OCI-LY7 (cell line): ENCODE measurements at regions of chr2 and their contacts with region 1.

Region 1: GRCh38 chr2:37376421-37377186 is 32.2 kb downstream of the QPCT start:
- DNase-seq: peak; percentile 95
- H3K4me3 ChIP-seq: peak overlapping the region; percentile 58
- H3K27ac ChIP-seq: peak overlapping the region; percentile 98
- H3K4me1 ChIP-seq: peaks cover 94% of the 10 kb centered on the region
- CTCF ChIP-seq: no peak

Region 2: GRCh38 chr2:36178384-36178783 is 1198.2 kb before region 1 on chr2:
- CTCF ChIA-PET with region 1: no interaction called
- POLR2A ChIA-PET with region 1: no interaction called
- intact Hi-C with region 1: no loop called
- DNase-seq: no peak
- H3K4me3 ChIP-seq: no peak overlapping the region
- H3K27ac ChIP-seq: no peak overlapping the region
- H3K4me1 ChIP-seq: no peaks in the 10 kb centered on the region
- CTCF ChIP-seq: no peak

Region 3: GRCh38 chr2:36197181-36197971 is 1179.2 kb before region 1 on chr2:
- CTCF ChIA-PET with region 1: no interaction called
- POLR2A ChIA-PET with region 1: no interaction called
- intact Hi-C with region 1: no loop called
- DNase-seq: no peak
- H3K4me3 ChIP-seq: no peak overlapping the region
- H3K27ac ChIP-seq: no peak overlapping the region
- H3K4me1 ChIP-seq: no peaks in the 10 kb centered on the region
- CTCF ChIP-seq: no peak

Region 4: DNA sequence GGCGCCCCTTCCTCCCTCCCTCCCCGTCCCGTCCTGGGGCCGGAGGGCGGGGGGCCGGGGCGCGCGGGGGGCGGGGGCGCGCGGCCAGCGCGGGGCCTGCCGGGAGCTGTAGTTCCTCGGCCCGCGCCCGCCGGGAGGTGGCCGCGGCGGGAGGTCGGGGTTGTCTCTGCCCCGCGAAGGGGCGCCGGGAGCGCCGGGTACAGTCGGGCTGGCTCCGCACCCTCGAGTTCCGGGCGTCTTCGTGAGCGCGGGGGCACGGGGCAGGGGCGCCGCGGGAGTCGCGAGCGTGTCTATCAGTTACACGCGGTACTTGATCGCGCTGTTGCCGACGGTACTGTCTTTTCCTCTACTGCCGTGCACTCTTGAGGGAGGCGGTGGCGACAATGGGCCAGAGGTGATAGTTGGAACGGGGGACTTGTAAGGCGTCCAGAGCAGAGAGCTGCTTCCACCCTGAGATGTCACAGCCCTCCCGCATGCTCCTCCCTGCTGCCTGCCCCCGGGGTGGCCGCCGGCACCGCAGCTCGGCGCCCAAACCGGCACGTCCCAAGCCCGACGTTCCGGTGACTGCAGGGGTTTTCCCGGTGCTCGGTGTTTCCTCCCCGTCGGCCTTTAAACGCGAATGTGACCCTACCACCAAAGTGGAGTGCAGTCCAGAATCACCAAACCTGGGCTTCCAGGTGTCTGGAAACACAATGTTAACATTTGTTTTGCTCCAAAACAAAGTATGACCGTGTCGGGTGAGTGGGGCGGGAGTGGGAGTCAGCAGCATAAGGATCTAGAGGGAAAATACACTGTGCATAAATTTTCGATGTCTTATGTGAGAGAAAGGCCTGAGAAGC is 51.6 kb before region 1 on chr2 and contains the start of gene PRKD3:
- CTCF ChIA-PET with region 1: no interaction called
- POLR2A ChIA-PET with region 1: interaction called, 209 read pairs
- intact Hi-C with region 1: loop called (anchors 2 kb)
- DNase-seq: no peak
- H3K4me3 ChIP-seq: peak within 1 kb of the TSS; percentile 98
- H3K27ac ChIP-seq: peak within 1 kb of the TSS; percentile 81
- H3K4me1 ChIP-seq: peaks cover 40% of the 10 kb centered on the region
- CTCF ChIP-seq: no peak
- total RNA-seq, gene PRKD3: 63.2 and 74.3 TPM in 2 replicates

Region 5: GRCh38 chr2:37337642-37338310 is 38.8 kb before region 1 on chr2:
- CTCF ChIA-PET with region 1: interaction called, 4 read pairs
- POLR2A ChIA-PET with region 1: interaction called, 208 read pairs
- intact Hi-C with region 1: loop called (anchors 1 kb)
- DNase-seq: peak; percentile 35
- H3K4me3 ChIP-seq: peak overlapping the region; percentile 49
- H3K27ac ChIP-seq: peak overlapping the region; percentile 74
- H3K4me1 ChIP-seq: peaks cover 76% of the 10 kb centered on the region
- CTCF ChIP-seq: no peak

Region 6: GRCh38 chr2:37350034-37350433 is 26.6 kb before region 1 on chr2:
- CTCF ChIA-PET with region 1: interaction called, 5 read pairs
- POLR2A ChIA-PET with region 1: interaction called, 179 read pairs
- intact Hi-C with region 1: loop called (anchors 1 kb)
- DNase-seq: peak; percentile 63
- H3K4me3 ChIP-seq: no peak overlapping the region
- H3K27ac ChIP-seq: peak overlapping the region; percentile 43
- H3K4me1 ChIP-seq: peaks cover 71% of the 10 kb centered on the region
- CTCF ChIP-seq: no peak

Region 7: DNA sequence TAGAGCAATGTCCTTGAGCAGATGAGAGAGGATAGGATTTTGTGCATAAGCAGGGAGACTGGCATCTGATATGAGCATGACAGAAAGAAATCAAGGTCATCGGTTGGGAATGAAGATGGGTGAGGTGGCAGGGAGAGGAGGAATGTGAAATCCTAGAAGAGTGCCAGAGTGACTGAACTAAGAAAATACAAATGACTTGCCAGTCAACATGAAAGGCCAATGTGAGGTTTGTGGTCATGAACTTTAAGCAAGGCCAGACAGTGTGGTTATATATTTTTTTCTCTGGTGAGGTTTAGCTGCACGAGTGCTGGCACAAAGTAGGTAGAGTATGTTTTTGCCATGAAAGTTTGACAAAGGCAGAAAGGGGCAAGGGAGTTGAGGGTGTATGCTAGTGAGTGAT is 10.9 kb before region 1 on chr2:
- CTCF ChIA-PET with region 1: interaction called, 4 read pairs
- POLR2A ChIA-PET with region 1: interaction called, 144 read pairs
- intact Hi-C with region 1: no loop called
- DNase-seq: no peak
- H3K4me3 ChIP-seq: no peak overlapping the region
- H3K27ac ChIP-seq: no peak overlapping the region
- H3K4me1 ChIP-seq: peaks cover 22% of the 10 kb centered on the region
- CTCF ChIP-seq: no peak

Region 8: GRCh38 chr2:38141501-38141900 is 764.9 kb after region 1 on chr2:
- CTCF ChIA-PET with region 1: no interaction called
- POLR2A ChIA-PET with region 1: no interaction called
- intact Hi-C with region 1: no loop called
- DNase-seq: no peak
- H3K4me3 ChIP-seq: no peak overlapping the region
- H3K27ac ChIP-seq: no peak overlapping the region
- H3K4me1 ChIP-seq: no peaks in the 10 kb centered on the region
- CTCF ChIP-seq: no peak